Activated CD4-positive, alpha-beta memory T cell treated with anti-CD3 and anti-CD28 coated beads, Interleukin-2, amount 10 ng/mL, durations not matched to agents 7 days and 5 days (primary cell): ENCODE measurements at regions of chr4 and their contacts with region 1.

Region 1: GRCh38 chr4:185597532-185598188 is 62.4 kb upstream of the PDLIM3 start:
- DNase-seq: peak; percentile 65
- H3K4me3 Mint-ChIP-seq: no peak overlapping the region
- H3K27ac Mint-ChIP-seq: no peak overlapping the region
- H3K4me1 Mint-ChIP-seq: no peaks in the 10 kb centered on the region
- H3K27me3 Mint-ChIP-seq: peaks cover 31% of the 10 kb centered on the region

Region 2: DNA sequence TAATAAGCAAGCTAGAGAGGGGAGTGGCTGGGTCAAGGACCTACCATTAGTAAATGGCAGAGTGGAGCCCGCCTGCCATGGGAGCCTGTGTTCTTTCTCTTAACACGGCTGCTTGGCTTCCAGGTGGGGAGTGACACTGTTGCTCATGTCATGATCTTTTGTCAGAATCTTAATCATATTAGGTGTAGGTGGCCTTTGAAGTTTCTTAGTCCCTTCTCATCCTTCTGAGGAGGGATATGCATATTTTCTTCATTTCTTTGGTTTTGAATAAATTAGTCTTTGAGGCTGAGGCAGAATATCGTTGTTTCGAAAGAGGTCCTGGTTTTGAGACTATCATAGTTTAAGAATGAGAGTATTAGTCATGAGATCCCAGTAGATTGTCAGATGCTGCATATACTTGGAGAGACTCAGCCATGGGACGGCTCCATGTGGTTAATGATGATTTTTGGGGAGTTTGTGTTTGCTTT is 359.4 kb before region 1 on chr4:
- CTCF ChIA-PET with region 1: no interaction called
- POLR2A ChIA-PET with region 1: no interaction called
- DNase-seq: no peak
- H3K4me3 Mint-ChIP-seq: no peak overlapping the region
- H3K27ac Mint-ChIP-seq: no peak overlapping the region
- H3K4me1 Mint-ChIP-seq: peaks cover 10% of the 10 kb centered on the region
- H3K27me3 Mint-ChIP-seq: no peaks in the 10 kb centered on the region

Region 3: DNA sequence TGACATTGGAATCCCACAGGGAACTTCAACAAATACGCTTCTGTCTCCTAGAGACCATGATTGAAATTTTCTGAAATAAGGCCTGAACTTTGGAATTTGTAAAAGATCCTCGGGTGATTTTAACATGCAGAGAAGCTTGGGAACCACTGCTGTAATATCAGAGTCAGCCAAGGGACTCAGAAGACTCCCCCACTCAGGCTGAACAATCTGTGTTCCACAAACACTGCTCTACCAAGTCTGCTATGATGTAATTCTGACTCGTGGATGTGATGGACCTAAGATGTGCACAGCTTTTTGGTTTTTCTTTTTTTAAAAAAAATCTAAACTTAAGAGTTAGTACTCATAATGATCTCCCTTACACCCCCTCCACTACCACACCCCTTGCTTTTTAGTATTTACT is 227.9 kb before region 1 on chr4:
- CTCF ChIA-PET with region 1: no interaction called
- POLR2A ChIA-PET with region 1: no interaction called
- DNase-seq: no peak
- H3K4me3 Mint-ChIP-seq: no peak overlapping the region
- H3K27ac Mint-ChIP-seq: no peak overlapping the region
- H3K4me1 Mint-ChIP-seq: no peaks in the 10 kb centered on the region
- H3K27me3 Mint-ChIP-seq: no peaks in the 10 kb centered on the region

Region 4: DNA sequence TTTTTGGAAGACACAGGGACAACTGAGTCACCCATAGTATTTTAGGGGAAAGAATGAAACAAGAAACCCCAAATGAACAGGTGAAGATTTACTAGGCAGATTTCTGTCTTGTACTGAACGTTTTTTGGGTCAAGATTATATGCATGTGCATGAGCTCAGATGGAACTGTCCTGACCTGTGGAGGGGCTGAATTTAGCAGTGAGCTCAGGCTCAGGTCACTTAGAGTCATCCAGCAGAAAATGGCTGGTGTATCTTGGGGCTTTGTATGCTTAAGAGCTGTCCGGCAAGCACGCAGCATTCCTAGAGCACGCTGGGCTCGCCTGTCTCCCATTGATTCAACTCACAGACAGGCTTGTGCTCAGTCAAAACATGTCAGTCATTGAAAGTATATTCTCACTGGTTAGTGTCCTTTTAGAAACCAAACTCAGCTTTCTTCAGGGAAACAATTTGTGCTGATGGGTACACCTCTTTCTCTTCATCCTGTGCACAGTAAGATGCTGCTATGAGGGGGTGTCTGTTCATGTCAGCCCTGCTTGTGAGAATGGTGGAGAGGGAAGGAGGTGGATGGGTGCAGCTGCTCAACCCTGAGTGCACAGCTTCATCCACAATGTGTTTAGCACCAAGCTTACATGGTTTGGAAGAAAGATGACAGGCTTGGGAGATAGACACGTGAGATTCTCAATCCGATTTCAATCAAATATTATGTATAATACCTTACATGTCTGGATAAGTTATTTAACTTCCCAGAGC is 14.8 kb before region 1 on chr4:
- CTCF ChIA-PET with region 1: interaction called, 15 read pairs
- POLR2A ChIA-PET with region 1: no interaction called
- DNase-seq: no peak
- H3K4me3 Mint-ChIP-seq: no peak overlapping the region
- H3K27ac Mint-ChIP-seq: no peak overlapping the region
- H3K4me1 Mint-ChIP-seq: peaks cover 9% of the 10 kb centered on the region
- H3K27me3 Mint-ChIP-seq: peaks cover 26% of the 10 kb centered on the region

Region 5: DNA sequence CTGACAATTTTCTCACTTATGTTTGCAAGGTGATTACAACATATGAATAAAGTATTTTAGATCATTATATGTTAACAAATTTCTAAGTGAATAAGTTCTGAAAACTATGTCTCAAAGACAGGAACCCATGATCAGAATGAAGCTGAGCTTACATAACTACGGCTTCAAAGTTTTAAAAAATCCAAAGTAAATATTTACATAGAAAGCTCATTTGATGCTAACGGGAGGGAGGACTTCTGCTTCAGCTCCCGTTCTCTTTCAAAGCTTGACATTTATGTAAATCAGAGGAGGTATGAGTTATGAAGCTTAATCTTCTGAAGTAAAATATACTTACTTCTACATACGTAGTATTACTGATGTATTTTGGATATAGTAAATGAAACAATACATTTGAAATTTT is 10.5 kb after region 1 on chr4:
- CTCF ChIA-PET with region 1: interaction called, 10 read pairs
- POLR2A ChIA-PET with region 1: no interaction called
- DNase-seq: no peak
- H3K4me3 Mint-ChIP-seq: no peak overlapping the region
- H3K27ac Mint-ChIP-seq: no peak overlapping the region
- H3K4me1 Mint-ChIP-seq: no peaks in the 10 kb centered on the region
- H3K27me3 Mint-ChIP-seq: no peaks in the 10 kb centered on the region